Mammary epithelial cell (primary cell): ENCODE measurements at regions of chr10 and their contacts with region 1.

Region 1: GRCh38 chr10:48833674-48834073 is 106.0 kb downstream of the LRRC18 start:
- DNase-seq: no peak
- H3K4me3 ChIP-seq: no peak overlapping the region
- H3K27ac ChIP-seq: no peak overlapping the region
- H3K4me1 ChIP-seq: no peaks in the 10 kb centered on the region
- H3K27me3 ChIP-seq: peaks cover 5% of the 10 kb centered on the region
- CTCF ChIP-seq: no peak

Region 2: DNA sequence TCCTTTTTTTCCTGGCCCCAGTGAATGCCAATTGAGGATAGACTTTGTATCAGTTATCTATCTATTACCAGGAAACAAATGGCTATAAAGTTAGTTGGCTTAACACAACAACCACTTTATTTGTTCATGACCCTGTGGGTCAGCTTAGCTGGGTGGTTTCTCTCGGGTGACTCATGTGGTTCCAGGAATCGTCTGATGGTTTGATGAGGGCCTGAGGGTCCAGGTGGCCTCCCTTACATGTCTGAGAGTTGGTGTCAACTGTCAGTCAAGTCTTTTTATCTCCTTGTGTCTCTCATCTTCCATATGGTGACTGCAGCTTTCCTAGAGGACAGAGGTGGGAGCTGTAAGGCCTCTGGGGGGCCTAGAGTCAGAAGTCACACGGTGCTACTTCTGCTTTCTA is 542.5 kb before region 1 on chr10:
- CTCF ChIA-PET with region 1: no interaction called
- dilution Hi-C with region 1: no loop called
- in situ Hi-C with region 1: no loop called
- intact Hi-C with region 1: no loop called
- DNase-seq: peak; percentile 14
- H3K4me3 ChIP-seq: no peak overlapping the region
- H3K27ac ChIP-seq: no peak overlapping the region
- H3K4me1 ChIP-seq: peaks cover 3% of the 10 kb centered on the region
- H3K27me3 ChIP-seq: no peaks in the 10 kb centered on the region
- CTCF ChIP-seq: no peak

Region 3: GRCh38 chr10:48880016-48880705 is 46.5 kb after region 1 on chr10:
- CTCF ChIA-PET with region 1: no interaction called
- dilution Hi-C with region 1: loop called (anchors 5 kb)
- in situ Hi-C with region 1: no loop called
- intact Hi-C with region 1: loop called (anchors 5 kb)
- DNase-seq: no peak
- H3K4me3 ChIP-seq: no peak overlapping the region
- H3K27ac ChIP-seq: no peak overlapping the region
- H3K4me1 ChIP-seq: no peaks in the 10 kb centered on the region
- H3K27me3 ChIP-seq: no peaks in the 10 kb centered on the region
- CTCF ChIP-seq: no peak